ENCODE measurements at regions of chr12 and their contacts with region 1.

Region 1: DNA sequence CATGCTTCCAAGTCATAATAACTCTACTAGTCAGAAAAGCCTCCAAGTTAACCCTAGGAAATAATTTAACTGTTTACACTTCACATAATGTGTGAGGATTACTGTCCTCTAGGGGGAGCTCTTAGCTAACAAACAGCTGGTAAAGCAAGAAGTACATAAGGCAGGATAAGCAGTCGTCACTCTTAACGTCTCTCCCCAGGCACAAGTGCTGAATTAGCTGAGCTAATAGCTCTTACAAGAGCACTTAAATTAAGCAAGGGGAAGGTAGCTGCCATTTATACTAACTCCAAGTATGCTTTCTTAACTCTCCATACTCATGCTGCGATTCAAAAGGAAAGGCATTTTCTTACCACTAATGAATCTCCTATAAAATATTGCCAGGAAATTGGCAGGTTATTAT is 79.3 kb upstream of the TSPAN11 start:
- DNase-seq: no peak
- H3K4me3 Mint-ChIP-seq: no peak overlapping the region
- H3K27ac Mint-ChIP-seq: no peak overlapping the region
- H3K4me1 Mint-ChIP-seq: peaks cover 6% of the 10 kb centered on the region
- H3K27me3 Mint-ChIP-seq: no peaks in the 10 kb centered on the region

Region 2: GRCh38 chr12:30985814-30986452 is 138.7 kb after region 1 on chr12:
- CTCF ChIA-PET with region 1: interaction called, 60 read pairs
- POLR2A ChIA-PET with region 1: no interaction called
- intact Hi-C with region 1: loop called (anchors 1 kb)
- DNase-seq: peak; percentile 45
- H3K4me3 Mint-ChIP-seq: no peak overlapping the region
- H3K27ac Mint-ChIP-seq: no peak overlapping the region
- H3K4me1 Mint-ChIP-seq: no peaks in the 10 kb centered on the region
- H3K27me3 Mint-ChIP-seq: no peaks in the 10 kb centered on the region

Region 3: GRCh38 chr12:31205054-31205453 is 357.8 kb after region 1 on chr12:
- CTCF ChIA-PET with region 1: no interaction called
- POLR2A ChIA-PET with region 1: no interaction called
- intact Hi-C with region 1: loop called (anchors 1 kb)
- DNase-seq: no peak
- H3K4me3 Mint-ChIP-seq: no peak overlapping the region
- H3K27ac Mint-ChIP-seq: no peak overlapping the region
- H3K4me1 Mint-ChIP-seq: peaks cover 12% of the 10 kb centered on the region
- H3K27me3 Mint-ChIP-seq: peaks cover 22% of the 10 kb centered on the region

Region 4: GRCh38 chr12:31325877-31326631 is 478.8 kb after region 1 on chr12 and contains the start of gene SINHCAF:
- CTCF ChIA-PET with region 1: no interaction called
- POLR2A ChIA-PET with region 1: no interaction called
- intact Hi-C with region 1: loop called (anchors 1 kb)
- DNase-seq: peak; percentile 99
- H3K4me3 Mint-ChIP-seq: peak within 1 kb of the TSS; percentile 100
- H3K27ac Mint-ChIP-seq: peak within 1 kb of the TSS; percentile 99
- H3K4me1 Mint-ChIP-seq: peaks cover 24% of the 10 kb centered on the region
- H3K27me3 Mint-ChIP-seq: peaks cover 2% of the 10 kb centered on the region
- total RNA-seq, gene SINHCAF: 181 to 186 TPM

Measured in activated CD4-positive, alpha-beta memory T cell treated with anti-CD3 and anti-CD28 coated beads for 36 hours (primary cell).